CD8-positive, alpha-beta memory T cell (primary cell): ENCODE measurements at regions of chr7 and their contacts with region 1.

Region 1: GRCh38 chr7:99489235-99489634 is 10.8 kb downstream of the ZNF394 start:
- DNase-seq: no peak
- H3K4me3 ChIP-seq: no peak overlapping the region
- H3K4me3 Mint-ChIP-seq: peak overlapping the region in 1 of 7 donors; percentile 43
- H3K27ac ChIP-seq: no peak overlapping the region
- H3K27ac Mint-ChIP-seq: peak overlapping the region in 2 of 8 donors; percentile 7 to 54
- H3K4me1 ChIP-seq: no peaks in the 10 kb centered on the region
- H3K4me1 Mint-ChIP-seq: peaks cover 0 to 13% (median 13%) of the 10 kb centered on the region in 3 donors
- H3K27me3 ChIP-seq: no peaks in the 10 kb centered on the region
- H3K27me3 Mint-ChIP-seq: no peaks in the 10 kb centered on the region

Region 2: DNA sequence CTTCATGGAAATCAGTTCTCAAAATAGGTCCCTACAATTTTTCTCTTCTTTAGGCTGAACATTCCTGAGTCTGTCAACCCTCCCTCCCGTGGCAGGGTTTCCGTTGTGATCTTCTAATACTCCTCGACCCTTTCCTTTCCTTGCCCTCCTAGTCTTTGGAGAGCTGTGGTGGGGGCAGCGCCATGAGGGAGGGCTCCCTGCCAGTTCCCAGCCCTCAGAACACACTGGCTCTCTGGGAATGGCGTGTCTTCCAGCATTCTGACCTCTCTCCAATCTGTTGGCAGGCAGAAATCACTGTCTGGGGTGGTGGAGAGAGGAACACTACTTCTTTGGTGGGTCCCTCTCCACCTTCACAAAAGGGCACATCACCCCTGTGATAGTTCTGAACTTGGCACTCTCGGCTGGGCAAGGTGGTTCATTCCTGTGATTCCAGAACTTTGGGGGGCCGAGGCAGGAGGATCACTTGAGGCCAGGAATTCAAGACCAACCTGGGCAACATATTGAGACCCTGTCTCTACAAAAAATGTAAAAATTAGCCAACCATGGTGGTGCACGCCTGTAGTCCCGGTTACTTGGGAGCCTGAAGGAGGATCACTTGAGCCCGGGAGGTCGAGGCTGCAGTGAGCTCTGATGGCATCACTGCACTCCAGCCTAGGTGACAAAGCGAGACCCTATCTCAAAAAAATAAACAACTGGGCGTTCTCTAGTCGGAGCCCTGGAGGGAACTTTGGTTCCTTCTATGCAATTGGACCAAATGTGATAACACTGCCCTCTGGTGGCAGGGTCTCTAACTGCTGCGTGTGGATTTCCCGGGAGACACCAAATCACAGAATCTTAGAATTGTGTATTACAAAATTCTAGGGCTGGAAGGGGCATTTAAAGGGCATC is 176.7 kb before region 1 on chr7:
- CTCF ChIA-PET with region 1: no interaction called
- POLR2A ChIA-PET with region 1: interaction called, 10 read pairs
- DNase-seq: peak; percentile 47 to 78 (median 62)
- H3K4me3 ChIP-seq: no peak overlapping the region
- H3K4me3 Mint-ChIP-seq: peak overlapping the region in 6 of 7 donors; percentile 16 to 59 (median 44)
- H3K27ac ChIP-seq: no peak overlapping the region
- H3K27ac Mint-ChIP-seq: no peak overlapping the region
- H3K4me1 ChIP-seq: no peaks in the 10 kb centered on the region
- H3K4me1 Mint-ChIP-seq: peaks cover 1 to 10% (median 10%) of the 10 kb centered on the region in 3 donors
- H3K27me3 ChIP-seq: no peaks in the 10 kb centered on the region
- H3K27me3 Mint-ChIP-seq: peaks cover 8 to 29% of the 10 kb centered on the region in 2 donors

Region 3: DNA sequence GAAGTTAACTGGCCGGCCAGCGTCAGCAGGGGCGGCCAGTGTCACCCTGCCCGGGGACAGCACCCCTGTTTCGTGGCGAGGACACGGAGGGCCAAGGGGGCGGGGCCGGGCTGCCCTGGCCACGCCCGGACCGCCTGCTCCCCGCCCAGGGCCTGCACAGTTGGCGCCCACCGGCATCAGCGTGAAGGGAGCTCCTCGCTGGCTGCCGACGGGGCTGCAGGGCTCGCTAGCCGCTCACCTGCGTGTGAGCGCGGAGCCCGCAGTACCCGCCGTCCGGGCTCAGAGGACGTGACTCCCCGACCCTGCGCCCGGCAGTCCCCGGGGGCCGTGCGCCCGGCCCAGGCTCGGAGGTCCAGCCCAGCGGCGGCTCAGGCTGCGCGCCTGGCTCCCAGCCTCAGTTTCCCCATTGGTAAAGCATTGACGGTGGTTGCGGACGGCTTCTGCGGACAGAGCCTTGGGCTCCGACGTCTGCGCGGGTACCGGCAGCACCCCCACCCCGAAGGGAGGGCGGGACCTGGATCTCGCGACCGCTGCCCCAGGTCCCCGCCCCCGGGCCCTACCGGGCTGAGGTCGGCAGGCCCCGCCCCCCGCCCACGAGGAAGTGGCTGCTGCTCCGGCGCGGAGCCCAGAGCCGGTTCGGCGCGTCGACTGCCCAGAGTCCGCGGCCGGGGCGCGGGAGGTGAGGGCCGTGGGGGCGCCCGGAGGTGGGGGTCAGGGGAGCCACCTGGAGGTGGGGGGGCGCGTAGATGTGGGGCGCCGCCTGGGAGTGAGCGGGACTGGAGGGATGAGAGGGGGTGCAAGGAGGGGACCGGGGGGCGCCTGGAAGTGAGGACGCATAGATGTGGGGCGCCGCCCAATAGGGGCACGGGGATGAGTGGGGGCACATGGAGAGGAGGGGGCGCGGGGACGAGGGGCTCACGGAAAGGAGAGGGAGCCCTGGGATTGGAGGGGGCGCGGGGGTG is 114.9 kb before region 1 on chr7 and contains the start of gene ARPC1B:
- CTCF ChIA-PET with region 1: no interaction called
- POLR2A ChIA-PET with region 1: no interaction called
- DNase-seq: peak; percentile 80 to 90 (median 82)
- H3K4me3 ChIP-seq: peak within 1 kb of the TSS; percentile 83
- H3K4me3 Mint-ChIP-seq: peak within 1 kb of the TSS; percentile 77 to 92 (median 80)
- H3K27ac ChIP-seq: peak within 1 kb of the TSS; percentile 90
- H3K27ac Mint-ChIP-seq: peak within 1 kb of the TSS; percentile 68 to 98 (median 94)
- H3K4me1 ChIP-seq: peaks cover 38% of the 10 kb centered on the region
- H3K4me1 Mint-ChIP-seq: peaks cover 23 to 34% (median 26%) of the 10 kb centered on the region in 3 donors
- H3K27me3 ChIP-seq: no peaks in the 10 kb centered on the region
- H3K27me3 Mint-ChIP-seq: no peaks in the 10 kb centered on the region
- total RNA-seq, gene ARPC1B: 238 to 258 TPM

Region 4: GRCh38 chr7:99521399-99521798 is 32.2 kb after region 1 on chr7:
- CTCF ChIA-PET with region 1: no interaction called
- POLR2A ChIA-PET with region 1: no interaction called
- DNase-seq: no peak
- H3K4me3 ChIP-seq: no peak overlapping the region
- H3K4me3 Mint-ChIP-seq: no peak overlapping the region
- H3K27ac ChIP-seq: no peak overlapping the region
- H3K27ac Mint-ChIP-seq: no peak overlapping the region
- H3K4me1 ChIP-seq: no peaks in the 10 kb centered on the region
- H3K4me1 Mint-ChIP-seq: peaks cover 0 to 5% (median 2%) of the 10 kb centered on the region in 3 donors
- H3K27me3 ChIP-seq: no peaks in the 10 kb centered on the region
- H3K27me3 Mint-ChIP-seq: peaks cover 0 to 2% of the 10 kb centered on the region in 2 donors